Lower leg skin (tissue), 4 donors: ENCODE measurements at regions of chr17 and their contacts with region 1.

Region 1: DNA sequence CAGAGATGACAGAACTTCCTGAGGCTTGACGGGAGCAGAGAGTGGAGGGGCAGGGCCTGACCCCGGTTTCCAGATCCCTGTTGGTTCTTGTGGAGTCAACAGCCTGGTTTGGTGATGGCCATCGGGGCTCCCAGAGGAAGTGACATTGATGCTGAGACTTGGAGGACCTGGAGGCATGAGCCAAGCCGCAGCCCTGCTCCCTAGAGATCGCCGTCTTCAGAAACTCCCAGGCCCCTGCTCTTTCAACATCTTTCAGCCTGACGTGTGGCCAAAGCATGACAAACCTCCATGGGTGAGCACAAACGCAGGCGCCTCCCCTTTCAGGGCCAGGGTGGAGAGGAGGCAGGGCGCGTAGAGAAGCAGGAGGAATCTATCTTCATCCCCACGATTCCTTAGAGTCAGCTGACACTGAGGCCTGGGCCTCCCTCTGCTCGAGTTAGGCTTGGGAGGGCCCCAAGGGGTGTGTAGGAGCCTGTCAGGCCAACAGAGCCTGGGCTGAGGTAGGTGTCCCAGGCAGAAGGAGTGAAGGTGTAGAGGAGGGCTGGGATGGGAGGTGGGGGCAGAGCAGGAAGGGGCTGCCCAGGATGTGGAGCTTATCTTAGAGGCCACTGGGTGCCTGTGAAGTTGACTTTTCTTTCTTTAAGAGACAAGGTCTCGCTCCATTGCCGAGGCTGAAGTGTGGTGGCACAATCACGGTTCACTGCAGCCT is 56.1 kb upstream of the MED9 start:
- DNase-seq: peak; percentile 84 to 97
- H3K4me3 ChIP-seq: no peak overlapping the region
- CTCF ChIP-seq: no peak
- POLR2A ChIP-seq: no peak

Region 2: DNA sequence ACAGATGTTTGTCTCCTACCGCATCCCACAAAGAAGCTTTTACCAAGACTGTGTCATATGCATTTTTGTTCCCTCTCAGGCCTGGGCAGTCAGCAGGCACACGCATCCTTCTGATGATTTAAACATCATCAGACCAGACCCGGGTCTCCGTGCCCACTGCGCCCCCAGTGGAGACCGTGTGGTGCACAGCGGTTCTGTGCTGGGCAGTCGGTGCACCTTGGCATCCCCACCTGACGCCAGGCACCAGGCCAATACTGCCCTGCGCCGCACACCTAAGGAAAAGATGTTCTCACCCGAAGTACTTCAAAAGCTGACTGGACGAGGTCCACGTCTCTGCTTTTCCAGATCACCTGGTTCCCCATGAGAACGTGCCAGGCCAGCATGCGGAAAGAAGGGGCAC is 203.9 kb before region 1 on chr17:
- intact Hi-C with region 1: no loop called
- DNase-seq: no peak
- H3K4me3 ChIP-seq: no peak overlapping the region
- CTCF ChIP-seq: no peak
- POLR2A ChIP-seq: no peak

Region 3: GRCh38 chr17:17363638-17364337 is 56.9 kb before region 1 on chr17:
- intact Hi-C with region 1: loop called (anchors 10 kb)
- DNase-seq: peak in 1 of 2 donors; percentile 80
- H3K4me3 ChIP-seq: no peak overlapping the region
- CTCF ChIP-seq: no peak
- POLR2A ChIP-seq: no peak

Region 4: GRCh38 chr17:17476865-17477467 is 56.3 kb after region 1 on chr17 and contains the start of gene MED9:
- intact Hi-C with region 1: no loop called
- DNase-seq: peak; percentile 88 to 98
- H3K4me3 ChIP-seq: peak within 1 kb of the TSS; percentile 95
- CTCF ChIP-seq: no peak
- POLR2A ChIP-seq: peak in 1 of 2 donors; percentile 62
- total RNA-seq, gene MED9: 14.8 to 29.3 (median 24.2) TPM